CD8-positive, alpha-beta T cell (primary cell): ENCODE measurements at regions of chr6 and their contacts with region 1.

Region 1: GRCh38 chr6:107114213-107114905 is 956 bp downstream of the BEND3 start:
- DNase-seq: peak; percentile 28 to 83 (median 65)
- ATAC-seq: peak; percentile 53
- H3K4me3 ChIP-seq: peak overlapping the region; percentile 12 to 24
- H3K4me3 Mint-ChIP-seq: peak overlapping the region; percentile 83
- H3K27ac ChIP-seq: no peak overlapping the region
- H3K27ac Mint-ChIP-seq: no peak overlapping the region
- H3K4me1 ChIP-seq: peaks cover 11% of the 10 kb centered on the region
- H3K4me1 Mint-ChIP-seq: peaks cover 15% of the 10 kb centered on the region
- H3K27me3 ChIP-seq: peaks cover 0 to 8% of the 10 kb centered on the region in 2 experiments
- H3K27me3 Mint-ChIP-seq: no peaks in the 10 kb centered on the region
- CTCF ChIP-seq: peak; percentile 90

Region 2: GRCh38 chr6:106339334-106340029 is 774.9 kb before region 1 on chr6:
- CTCF ChIA-PET with region 1: interaction called, 3 read pairs
- POLR2A ChIA-PET with region 1: no interaction called
- intact Hi-C with region 1: loop called (anchors 5 kb)
- DNase-seq: peak in 7 of 9 experiments; percentile 3 to 70 (median 43)
- ATAC-seq: peak; percentile 84
- H3K4me3 ChIP-seq: no peak overlapping the region
- H3K4me3 Mint-ChIP-seq: peak overlapping the region; percentile 33
- H3K27ac ChIP-seq: no peak overlapping the region
- H3K27ac Mint-ChIP-seq: no peak overlapping the region
- H3K4me1 ChIP-seq: no peaks in the 10 kb centered on the region
- H3K4me1 Mint-ChIP-seq: peaks cover 6% of the 10 kb centered on the region
- H3K27me3 ChIP-seq: peaks cover 0 to 2% of the 10 kb centered on the region in 2 experiments
- H3K27me3 Mint-ChIP-seq: peaks cover 23% of the 10 kb centered on the region
- CTCF ChIP-seq: peak; percentile 74

Region 3: DNA sequence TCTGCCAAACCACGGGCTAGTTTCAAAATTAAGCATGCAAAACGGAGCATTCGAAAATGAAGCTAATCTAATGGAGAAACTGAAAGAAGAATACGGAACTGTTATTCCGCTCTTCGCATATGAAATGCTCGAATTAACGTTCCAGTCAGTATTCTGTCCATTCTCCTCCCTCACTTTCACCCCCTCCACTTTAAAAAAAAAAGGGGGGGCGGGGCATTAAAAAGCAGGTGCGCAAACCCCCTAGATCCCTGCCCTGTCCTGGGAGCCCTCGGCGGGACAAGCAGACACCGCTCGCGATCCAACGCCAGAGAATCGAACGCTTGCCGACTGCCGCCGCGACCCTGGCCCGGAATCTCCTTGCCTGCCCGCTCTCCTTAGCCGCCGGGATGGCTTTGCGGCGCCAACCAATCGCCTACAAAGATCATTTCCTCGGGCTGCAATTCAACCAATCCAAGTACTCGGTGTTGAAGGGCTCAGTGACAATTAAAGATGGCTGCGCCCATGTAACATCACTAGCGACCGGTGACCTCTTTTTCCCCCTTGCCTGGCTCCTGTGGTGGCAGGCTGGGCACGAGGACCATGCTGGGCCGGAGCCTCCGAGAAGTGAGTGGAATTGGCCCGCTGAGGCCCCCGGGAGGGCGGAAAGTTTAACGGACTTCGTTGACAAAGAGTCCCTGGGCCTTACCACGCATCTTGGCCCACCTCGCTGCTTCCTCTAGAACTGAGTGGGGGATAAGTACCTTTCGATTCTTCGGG is 485.1 kb before region 1 on chr6 and contains the starts of genes QRSL1 and RTN4IP1:
- CTCF ChIA-PET with region 1: no interaction called
- POLR2A ChIA-PET with region 1: no interaction called
- intact Hi-C with region 1: loop called in 1 of 2 experiments (anchors 10 kb)
- DNase-seq: peak; percentile 70 to 95 (median 82)
- ATAC-seq: peak; percentile 90
- H3K4me3 ChIP-seq: peak within 1 kb of the TSS; percentile 86 to 93
- H3K4me3 Mint-ChIP-seq: peak within 1 kb of the TSS; percentile 99
- H3K27ac ChIP-seq: peak within 1 kb of the TSS; percentile 83 to 88
- H3K27ac Mint-ChIP-seq: peak within 1 kb of the TSS; percentile 99
- H3K4me1 ChIP-seq: peaks cover 19% of the 10 kb centered on the region
- H3K4me1 Mint-ChIP-seq: peaks cover 43% of the 10 kb centered on the region
- H3K27me3 ChIP-seq: no peaks in the 10 kb centered on the region
- H3K27me3 Mint-ChIP-seq: no peaks in the 10 kb centered on the region
- CTCF ChIP-seq: no peak
- total RNA-seq, gene QRSL1: 11.1 to 11.6 TPM
- total RNA-seq, gene RTN4IP1: 1.8 to 1.9 TPM

Region 4: DNA sequence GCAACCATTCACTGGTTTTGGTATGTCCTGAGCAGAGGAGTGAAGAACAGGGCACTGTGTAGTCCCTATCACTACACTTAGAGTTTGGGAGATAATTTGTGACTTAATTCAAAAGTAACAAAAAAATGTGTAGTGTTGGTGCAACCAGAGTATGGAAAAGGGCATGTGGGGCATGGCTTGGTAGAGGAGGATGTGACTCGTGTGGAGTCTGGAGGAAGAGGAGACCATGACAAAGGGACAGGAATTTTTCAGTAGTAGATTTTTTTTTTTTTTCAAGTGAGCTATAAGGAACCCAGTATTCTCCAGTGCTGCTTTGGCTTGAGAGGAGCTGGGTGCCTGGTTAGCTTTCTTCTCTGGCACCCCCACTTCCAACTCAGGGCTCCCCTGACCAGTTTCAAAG is 81.2 kb before region 1 on chr6:
- CTCF ChIA-PET with region 1: interaction called, 9 read pairs
- POLR2A ChIA-PET with region 1: interaction called, 3 read pairs
- intact Hi-C with region 1: loop called (anchors 1 kb)
- DNase-seq: no peak
- ATAC-seq: no peak
- H3K4me3 ChIP-seq: no peak overlapping the region
- H3K4me3 Mint-ChIP-seq: no peak overlapping the region
- H3K27ac ChIP-seq: no peak overlapping the region
- H3K27ac Mint-ChIP-seq: no peak overlapping the region
- H3K4me1 ChIP-seq: peaks cover 10% of the 10 kb centered on the region
- H3K4me1 Mint-ChIP-seq: peaks cover 45% of the 10 kb centered on the region
- H3K27me3 ChIP-seq: no peaks in the 10 kb centered on the region
- H3K27me3 Mint-ChIP-seq: no peaks in the 10 kb centered on the region
- CTCF ChIP-seq: no peak

Region 5: DNA sequence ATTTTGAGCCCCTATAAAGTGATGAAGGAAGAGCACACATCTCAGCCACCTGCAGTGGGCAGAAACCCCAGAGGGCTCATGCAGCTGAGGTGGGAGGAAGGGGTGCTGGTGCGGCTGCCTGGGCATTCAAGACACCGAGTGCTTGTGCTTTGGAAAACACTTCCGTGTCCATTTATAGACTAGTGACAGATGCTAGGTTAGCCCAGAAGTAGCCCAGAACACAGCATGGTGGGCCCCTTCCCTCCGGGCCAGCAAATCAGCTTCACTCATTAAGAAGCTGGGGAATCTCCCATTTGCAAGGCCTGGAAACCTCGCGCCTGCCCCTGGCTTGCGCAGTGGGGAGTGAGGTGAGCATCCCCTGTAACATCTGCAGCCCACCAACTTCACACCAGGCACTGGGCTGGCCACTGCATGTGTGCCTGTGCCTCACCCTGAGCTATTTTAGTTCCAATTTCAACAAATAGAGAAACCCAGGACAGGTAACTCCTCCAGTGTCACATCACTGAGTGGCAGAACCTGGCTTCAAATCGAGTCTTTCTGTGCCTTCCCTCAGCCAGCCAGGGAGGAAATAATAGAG is 11.9 kb before region 1 on chr6:
- CTCF ChIA-PET with region 1: interaction called, 15 read pairs
- POLR2A ChIA-PET with region 1: no interaction called
- intact Hi-C with region 1: no loop called
- DNase-seq: no peak
- ATAC-seq: no peak
- H3K4me3 ChIP-seq: no peak overlapping the region
- H3K4me3 Mint-ChIP-seq: no peak overlapping the region
- H3K27ac ChIP-seq: no peak overlapping the region
- H3K27ac Mint-ChIP-seq: no peak overlapping the region
- H3K4me1 ChIP-seq: no peaks in the 10 kb centered on the region
- H3K4me1 Mint-ChIP-seq: peaks cover 3% of the 10 kb centered on the region
- H3K27me3 ChIP-seq: no peaks in the 10 kb centered on the region
- H3K27me3 Mint-ChIP-seq: no peaks in the 10 kb centered on the region
- CTCF ChIP-seq: no peak